Activated B cell treated with CpG ODN at 0.5 μM for 24 hours (primary cell): ENCODE measurements at regions of chr7 and their contacts with region 1.

Region 1: GRCh38 chr7:35801392-35802101 is 690 bp downstream of the SEPTIN7 start:
- DNase-seq: peak; percentile 73
- ATAC-seq: peak; percentile 35
- H3K4me3 Mint-ChIP-seq: peak overlapping the region; percentile 96
- H3K27ac Mint-ChIP-seq: peak overlapping the region; percentile 99
- H3K4me1 Mint-ChIP-seq: peaks cover 57% of the 10 kb centered on the region
- H3K27me3 Mint-ChIP-seq: no peaks in the 10 kb centered on the region
- CTCF ChIP-seq: no peak

Region 2: DNA sequence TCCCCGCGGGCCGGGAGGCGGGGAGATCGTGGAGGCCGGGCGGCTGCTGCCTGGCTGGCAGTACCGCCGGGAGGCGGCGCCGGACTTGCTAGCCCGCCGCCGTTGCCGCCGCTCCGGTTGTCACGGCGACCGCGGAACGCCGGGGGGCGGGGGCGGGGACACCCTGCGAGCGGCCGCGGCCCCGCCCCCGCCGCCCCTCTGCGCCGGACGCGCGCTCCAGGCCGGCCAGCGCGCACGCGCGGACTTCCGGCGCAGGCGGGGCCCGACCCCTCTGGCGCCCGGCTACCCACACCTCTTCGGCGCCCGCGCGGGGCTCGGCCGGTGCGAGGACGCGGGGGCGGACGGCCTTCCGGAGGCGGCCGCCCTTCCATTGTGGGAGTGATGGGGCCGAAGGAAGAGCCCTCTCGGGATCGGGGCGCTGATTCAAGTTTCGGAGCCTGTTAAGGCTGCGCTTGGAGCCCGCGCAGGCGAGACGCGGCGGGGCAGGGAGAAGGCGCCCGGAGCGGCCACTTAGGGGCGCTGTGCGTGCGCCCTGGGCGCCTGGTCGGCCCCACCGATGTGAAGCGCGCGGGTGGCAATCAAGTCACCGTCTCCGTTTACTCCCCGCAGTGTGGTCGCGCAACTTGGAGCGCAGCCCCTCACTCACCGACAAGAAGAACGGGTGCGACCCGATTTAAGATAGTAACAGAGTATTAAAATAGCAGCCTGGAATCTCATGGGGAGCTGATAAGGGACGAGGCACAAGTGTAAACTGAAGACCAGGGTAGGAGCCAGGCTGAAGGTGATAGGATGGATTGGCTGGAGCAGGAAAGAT is 763.8 kb before region 1 on chr7:
- CTCF ChIA-PET with region 1: no interaction called
- POLR2A ChIA-PET with region 1: no interaction called
- intact Hi-C with region 1: loop called (anchors 1 kb)
- DNase-seq: peak; percentile 96
- ATAC-seq: peak; percentile 83
- H3K4me3 Mint-ChIP-seq: peak overlapping the region; percentile 86
- H3K27ac Mint-ChIP-seq: peak overlapping the region; percentile 72
- H3K4me1 Mint-ChIP-seq: peaks cover 29% of the 10 kb centered on the region
- H3K27me3 Mint-ChIP-seq: peaks cover 4% of the 10 kb centered on the region
- CTCF ChIP-seq: no peak

Region 3: GRCh38 chr7:35366167-35367155 is 435.1 kb before region 1 on chr7:
- CTCF ChIA-PET with region 1: no interaction called
- POLR2A ChIA-PET with region 1: no interaction called
- intact Hi-C with region 1: no loop called
- DNase-seq: no peak
- ATAC-seq: no peak
- H3K4me3 Mint-ChIP-seq: no peak overlapping the region
- H3K27ac Mint-ChIP-seq: no peak overlapping the region
- H3K4me1 Mint-ChIP-seq: no peaks in the 10 kb centered on the region
- H3K27me3 Mint-ChIP-seq: peaks cover 9% of the 10 kb centered on the region
- CTCF ChIP-seq: no peak

Region 4: DNA sequence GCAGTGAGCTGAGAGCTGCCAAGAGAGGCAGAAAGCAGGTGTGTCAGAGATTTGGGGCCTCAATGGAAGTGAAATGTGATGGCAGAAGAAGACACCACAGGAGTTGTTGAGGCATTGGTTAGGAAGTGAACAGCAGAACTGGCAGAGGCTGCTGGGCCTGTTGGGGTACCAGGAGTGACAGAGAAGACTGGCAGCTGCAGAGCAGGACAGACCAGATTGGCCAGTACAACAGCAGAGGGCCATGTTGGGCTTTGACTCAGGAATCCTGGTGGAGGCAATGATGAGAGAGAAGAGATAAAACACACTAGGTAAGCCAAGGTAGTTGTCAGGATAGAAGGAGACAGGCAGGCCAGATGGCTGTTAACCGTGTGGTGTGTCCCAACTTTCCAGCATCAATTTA is 86.7 kb before region 1 on chr7:
- CTCF ChIA-PET with region 1: interaction called, 36 read pairs
- POLR2A ChIA-PET with region 1: interaction called, 45 read pairs
- intact Hi-C with region 1: no loop called
- DNase-seq: no peak
- ATAC-seq: peak; percentile 57
- H3K4me3 Mint-ChIP-seq: no peak overlapping the region
- H3K27ac Mint-ChIP-seq: peak overlapping the region; percentile 59
- H3K4me1 Mint-ChIP-seq: peaks cover 31% of the 10 kb centered on the region
- H3K27me3 Mint-ChIP-seq: no peaks in the 10 kb centered on the region
- CTCF ChIP-seq: no peak

Region 5: DNA sequence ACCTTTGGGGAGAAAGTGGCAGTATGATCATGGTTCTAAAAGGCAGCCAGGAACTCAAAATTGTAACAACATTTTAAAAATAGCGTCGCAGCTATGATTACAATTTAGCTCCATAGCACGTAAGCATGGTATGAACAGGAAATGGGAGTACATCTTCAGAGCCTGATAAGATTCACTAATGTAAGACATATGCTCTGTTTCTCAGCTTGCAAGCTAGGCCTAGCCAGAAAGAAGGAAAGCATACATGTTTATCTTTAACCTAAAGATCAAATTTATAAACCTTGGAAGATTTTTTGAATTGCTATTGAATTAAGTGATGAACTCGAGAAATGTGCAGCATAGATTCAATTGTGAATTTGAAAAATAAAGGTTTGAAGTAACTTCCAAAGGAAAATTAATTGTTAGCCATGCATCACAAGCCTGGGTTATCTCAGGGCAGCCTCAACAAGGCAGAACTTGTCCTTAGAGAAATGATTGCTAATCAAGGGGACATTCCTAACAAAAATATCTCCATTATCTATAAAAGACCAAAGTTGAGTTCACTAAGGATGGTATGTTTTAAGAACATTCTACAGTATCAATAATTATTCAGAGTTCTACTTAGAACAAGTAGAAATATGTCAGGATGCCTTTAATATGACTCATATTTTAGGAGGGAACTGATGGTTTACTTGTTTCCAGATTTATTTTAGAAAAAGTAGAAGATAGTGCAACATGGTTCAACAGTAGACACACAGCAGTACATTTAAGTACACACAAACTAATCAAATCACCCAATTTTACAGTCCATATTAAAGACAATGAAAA is 39.5 kb before region 1 on chr7:
- CTCF ChIA-PET with region 1: no interaction called
- POLR2A ChIA-PET with region 1: interaction called, 3 read pairs
- intact Hi-C with region 1: loop called (anchors 5 kb)
- DNase-seq: no peak
- ATAC-seq: no peak
- H3K4me3 Mint-ChIP-seq: no peak overlapping the region
- H3K27ac Mint-ChIP-seq: no peak overlapping the region
- H3K4me1 Mint-ChIP-seq: peaks cover 7% of the 10 kb centered on the region
- H3K27me3 Mint-ChIP-seq: no peaks in the 10 kb centered on the region
- CTCF ChIP-seq: no peak

Region 6: GRCh38 chr7:35869810-35870209 is 68.3 kb after region 1 on chr7:
- CTCF ChIA-PET with region 1: no interaction called
- POLR2A ChIA-PET with region 1: interaction called, 3 read pairs
- intact Hi-C with region 1: loop called (anchors 5 kb)
- DNase-seq: no peak
- ATAC-seq: no peak
- H3K4me3 Mint-ChIP-seq: no peak overlapping the region
- H3K27ac Mint-ChIP-seq: no peak overlapping the region
- H3K4me1 Mint-ChIP-seq: peaks cover 33% of the 10 kb centered on the region
- H3K27me3 Mint-ChIP-seq: no peaks in the 10 kb centered on the region
- CTCF ChIP-seq: no peak

Region 7: GRCh38 chr7:36037121-36037662 is 235.6 kb after region 1 on chr7:
- CTCF ChIA-PET with region 1: no interaction called
- POLR2A ChIA-PET with region 1: no interaction called
- intact Hi-C with region 1: no loop called
- DNase-seq: no peak
- ATAC-seq: no peak
- H3K4me3 Mint-ChIP-seq: no peak overlapping the region
- H3K27ac Mint-ChIP-seq: no peak overlapping the region
- H3K4me1 Mint-ChIP-seq: no peaks in the 10 kb centered on the region
- H3K27me3 Mint-ChIP-seq: peaks cover 11% of the 10 kb centered on the region
- CTCF ChIP-seq: no peak

Region 8: DNA sequence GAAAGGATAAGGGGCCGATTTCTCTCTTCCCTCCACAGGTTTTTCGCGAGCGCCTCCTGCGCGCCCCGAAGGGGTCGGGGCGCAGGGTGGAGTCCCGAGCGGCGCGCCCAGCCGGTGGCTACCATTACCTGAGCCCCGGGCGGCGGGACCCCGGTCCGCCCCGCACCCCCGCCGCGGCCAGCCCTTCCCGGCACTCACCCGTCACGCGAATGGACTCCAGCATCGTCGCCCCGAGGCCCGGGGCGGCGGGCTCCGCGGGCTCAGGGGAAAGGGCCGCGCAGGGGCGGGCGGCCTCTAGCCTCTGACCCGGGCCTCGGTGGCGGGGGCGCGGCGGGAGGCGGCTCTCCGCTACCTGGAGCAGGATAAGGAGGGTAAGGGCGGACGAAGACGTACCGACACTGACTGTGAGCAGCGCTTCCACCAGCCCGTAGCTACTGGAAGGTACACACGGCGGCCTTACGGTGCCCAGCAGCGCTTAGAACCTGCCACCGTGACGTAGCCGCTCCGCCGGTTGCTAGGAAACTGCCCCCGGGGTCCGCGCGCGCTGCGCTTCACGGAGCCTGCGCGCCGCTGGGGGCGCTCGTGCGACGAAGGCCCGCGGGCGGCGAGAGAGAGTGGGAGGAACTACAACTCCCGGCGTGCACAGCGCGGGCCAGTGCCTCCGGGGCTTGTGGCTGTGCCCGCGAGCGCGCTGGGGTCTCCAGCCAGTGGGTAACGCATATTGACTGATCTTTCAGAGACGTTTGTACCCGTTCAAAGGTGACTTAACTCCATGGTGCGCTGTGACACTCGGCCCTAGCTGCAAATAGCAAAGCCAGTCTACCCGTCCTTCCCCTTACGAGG is 565.4 kb after region 1 on chr7:
- CTCF ChIA-PET with region 1: no interaction called
- POLR2A ChIA-PET with region 1: no interaction called
- intact Hi-C with region 1: loop called (anchors 5 kb)
- DNase-seq: peak; percentile 93
- ATAC-seq: peak; percentile 98
- H3K4me3 Mint-ChIP-seq: peak overlapping the region; percentile 92
- H3K27ac Mint-ChIP-seq: peak overlapping the region; percentile 30
- H3K4me1 Mint-ChIP-seq: peaks cover 5% of the 10 kb centered on the region
- H3K27me3 Mint-ChIP-seq: peaks cover 6% of the 10 kb centered on the region
- CTCF ChIP-seq: no peak